T-cell (primary cell): ENCODE measurements at regions of chr15 and their contacts with region 1.

Region 1: GRCh38 chr15:98865397-98866339 is 141.9 kb downstream of the PGPEP1L start:
- DNase-seq: peak; percentile 30 to 86 (median 65)
- ATAC-seq: peak; percentile 83 to 95 (median 92)
- H3K4me3 ChIP-seq: peak overlapping the region; percentile 54 to 68
- H3K4me3 Mint-ChIP-seq: peak overlapping the region; percentile 83 to 86 (median 86)
- H3K27ac ChIP-seq: peak overlapping the region; percentile 71
- H3K27ac Mint-ChIP-seq: peak overlapping the region; percentile 91 to 95
- H3K4me1 ChIP-seq: peaks cover 13 to 14% of the 10 kb centered on the region in 2 experiments
- H3K4me1 Mint-ChIP-seq: peaks cover 44 to 60% (median 57%) of the 10 kb centered on the region in 3 donors
- H3K27me3 ChIP-seq: no peaks in the 10 kb centered on the region
- H3K27me3 Mint-ChIP-seq: no peaks in the 10 kb centered on the region

Region 2: DNA sequence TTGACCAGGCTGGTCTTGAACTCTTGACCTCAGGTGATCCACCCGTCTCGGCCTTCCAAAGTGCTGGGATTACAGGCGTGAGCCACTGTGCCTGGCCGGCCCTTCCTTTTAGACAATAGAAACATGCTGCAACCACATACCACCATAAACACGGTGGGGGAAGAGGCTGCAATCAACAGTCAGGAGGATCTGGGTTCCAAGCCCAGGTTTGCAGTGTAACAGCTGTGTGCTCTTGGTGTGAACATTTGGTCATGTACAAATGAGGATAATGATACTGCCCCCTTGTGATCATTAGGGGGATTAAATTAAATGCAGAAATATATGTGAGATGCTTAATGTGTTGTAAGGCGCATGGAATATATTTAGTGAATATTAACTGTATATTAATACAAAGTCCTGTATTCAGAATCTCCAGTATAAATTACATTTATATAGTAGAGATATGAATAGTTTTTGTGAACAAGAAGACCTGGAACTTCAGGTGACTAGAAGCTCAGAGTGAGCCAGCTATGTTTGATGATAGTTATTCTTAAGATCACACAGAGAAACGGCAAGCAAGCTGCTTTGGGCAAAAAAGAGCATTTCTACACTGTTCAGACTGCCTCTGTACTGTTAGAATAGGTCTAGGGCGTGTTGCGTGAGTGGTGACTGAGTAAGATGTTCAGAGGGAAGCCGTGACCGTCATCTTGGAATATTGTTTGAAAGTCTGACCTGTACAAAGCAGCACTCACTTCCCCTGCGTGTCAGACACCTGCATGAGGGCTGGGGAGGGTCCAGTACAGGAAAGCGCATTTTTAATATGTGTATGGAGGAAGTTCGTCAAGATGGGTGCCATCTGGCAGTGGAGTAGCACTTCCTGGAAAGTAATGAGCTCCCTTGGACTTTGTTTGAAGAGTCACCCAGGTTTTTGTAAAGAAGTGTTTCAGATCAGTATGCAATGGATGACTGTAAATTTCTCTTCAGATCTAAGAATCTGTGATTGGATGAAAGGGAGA is 16.2 kb after region 1 on chr15:
- CTCF ChIA-PET with region 1: interaction called in 1 of 2 experiments, 15 read pairs
- POLR2A ChIA-PET with region 1: no interaction called
- DNase-seq: peak in 1 of 35 experiments; percentile 62
- ATAC-seq: peak in 3 of 4 experiments; percentile 35 to 52 (median 41)
- H3K4me3 ChIP-seq: no peak overlapping the region
- H3K4me3 Mint-ChIP-seq: no peak overlapping the region
- H3K27ac ChIP-seq: no peak overlapping the region
- H3K27ac Mint-ChIP-seq: no peak overlapping the region
- H3K4me1 ChIP-seq: peaks cover 0 to 4% of the 10 kb centered on the region in 2 experiments
- H3K4me1 Mint-ChIP-seq: peaks cover 24 to 39% (median 32%) of the 10 kb centered on the region in 3 donors
- H3K27me3 ChIP-seq: no peaks in the 10 kb centered on the region
- H3K27me3 Mint-ChIP-seq: no peaks in the 10 kb centered on the region